CD8-positive, alpha-beta T cell (primary cell): ENCODE measurements at regions of chr2 and their contacts with region 1.

Region 1: DNA sequence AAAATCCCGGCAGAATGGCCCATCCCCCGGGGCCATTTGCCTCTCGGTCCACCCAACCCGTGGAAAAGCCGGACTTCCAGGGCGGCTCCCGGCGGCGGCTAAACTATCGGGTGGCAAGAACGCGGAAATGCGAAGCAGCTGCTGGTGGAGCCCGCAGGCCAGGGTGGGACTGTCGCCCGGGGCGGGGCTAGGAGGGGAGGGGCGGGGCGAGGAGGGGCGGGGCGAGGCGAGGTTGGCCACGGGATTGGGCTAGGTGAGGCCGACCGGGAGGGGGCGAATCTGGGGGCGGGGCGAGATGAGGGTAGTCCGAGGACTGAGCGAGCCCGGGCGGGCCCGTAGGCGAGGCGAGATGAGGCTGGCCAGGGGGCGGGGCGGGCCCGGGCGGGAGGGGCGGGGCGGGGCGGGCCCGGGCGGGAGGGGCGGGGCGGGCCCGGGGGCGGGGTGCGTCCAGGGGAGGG is 315 bp upstream of the SLC66A3 start:
- DNase-seq: peak; percentile 96 to 99 (median 98)
- ATAC-seq: peak; percentile 91
- H3K4me3 ChIP-seq: peak overlapping the region; percentile 55 to 57
- H3K4me3 Mint-ChIP-seq: peak overlapping the region; percentile 80
- H3K27ac ChIP-seq: peak overlapping the region; percentile 68 to 78
- H3K27ac Mint-ChIP-seq: peak overlapping the region; percentile 85
- H3K4me1 ChIP-seq: peaks cover 18% of the 10 kb centered on the region
- H3K4me1 Mint-ChIP-seq: peaks cover 20% of the 10 kb centered on the region
- H3K27me3 ChIP-seq: no peaks in the 10 kb centered on the region
- H3K27me3 Mint-ChIP-seq: no peaks in the 10 kb centered on the region
- CTCF ChIP-seq: no peak

Region 2: DNA sequence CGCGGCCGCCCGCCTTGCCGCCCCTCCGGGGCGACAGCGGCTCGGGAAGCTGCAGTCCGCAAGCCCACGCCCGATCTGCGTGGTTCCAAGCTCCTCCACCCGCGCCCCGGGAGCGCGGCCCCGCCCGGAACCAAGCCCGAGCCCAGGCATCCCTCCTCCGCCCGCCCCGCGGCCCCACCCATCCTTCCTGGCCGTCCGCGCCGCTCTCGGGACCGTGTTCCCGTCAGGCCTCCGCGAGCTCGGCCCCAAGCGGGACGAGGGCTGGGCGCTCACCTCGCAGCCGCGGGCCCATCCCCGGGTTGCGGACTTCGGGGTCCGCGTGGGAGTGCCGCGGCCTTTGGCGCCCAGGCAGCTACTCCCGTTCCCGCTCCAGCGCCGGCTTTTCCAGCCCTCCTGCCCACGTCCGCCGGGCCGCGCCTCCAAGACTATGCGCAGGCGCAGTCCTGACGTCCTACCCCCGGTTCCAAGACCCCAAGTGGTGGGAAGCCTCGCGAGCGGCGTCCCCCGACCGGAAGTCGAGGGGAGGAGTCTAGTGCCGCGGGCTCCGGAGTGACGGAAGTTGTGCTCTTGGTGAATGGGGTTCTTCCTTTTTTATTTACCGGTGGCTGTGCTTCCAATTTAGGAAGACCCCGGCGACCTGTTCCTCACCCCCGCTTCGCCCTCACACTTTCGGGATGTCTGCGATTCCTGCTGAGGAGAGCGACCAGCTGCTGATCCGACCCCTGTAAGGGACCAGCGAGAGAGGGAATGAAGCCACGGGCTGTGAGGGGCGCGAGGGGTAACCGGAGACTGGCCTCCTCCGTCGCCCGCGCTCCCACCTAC is 1731.6 kb before region 1 on chr2 and contains the starts of genes CPSF3 and ITGB1BP1:
- CTCF ChIA-PET with region 1: no interaction called
- POLR2A ChIA-PET with region 1: no interaction called
- intact Hi-C with region 1: loop called in 1 of 2 experiments (anchors 10 kb)
- DNase-seq: peak; percentile 92 to 99 (median 97)
- ATAC-seq: peak; percentile 86
- H3K4me3 ChIP-seq: peak within 1 kb of the TSS; percentile 93 to 98
- H3K4me3 Mint-ChIP-seq: no peak within 1 kb of the TSS
- H3K27ac ChIP-seq: peak within 1 kb of the TSS; percentile 89 to 90
- H3K27ac Mint-ChIP-seq: peak within 1 kb of the TSS; percentile 89
- H3K4me1 ChIP-seq: peaks cover 22% of the 10 kb centered on the region
- H3K4me1 Mint-ChIP-seq: peaks cover 34% of the 10 kb centered on the region
- H3K27me3 ChIP-seq: no peaks in the 10 kb centered on the region
- H3K27me3 Mint-ChIP-seq: no peaks in the 10 kb centered on the region
- CTCF ChIP-seq: no peak
- total RNA-seq, gene CPSF3: 14.1 to 14.7 TPM
- total RNA-seq, gene ITGB1BP1: 37.2 to 38.8 TPM

Region 3: GRCh38 chr2:10302479-10303180 is 852.3 kb before region 1 on chr2 and contains the start of gene HPCAL1:
- CTCF ChIA-PET with region 1: no interaction called
- POLR2A ChIA-PET with region 1: no interaction called
- intact Hi-C with region 1: loop called in 1 of 2 experiments (anchors 10 kb)
- DNase-seq: peak; percentile 54 to 90 (median 80)
- ATAC-seq: peak; percentile 67
- H3K4me3 ChIP-seq: peak within 1 kb of the TSS; percentile 84 to 86
- H3K4me3 Mint-ChIP-seq: peak within 1 kb of the TSS; percentile 98
- H3K27ac ChIP-seq: peak within 1 kb of the TSS; percentile 52 to 73
- H3K27ac Mint-ChIP-seq: peak within 1 kb of the TSS; percentile 92
- H3K4me1 ChIP-seq: peaks cover 60% of the 10 kb centered on the region
- H3K4me1 Mint-ChIP-seq: peaks cover 70% of the 10 kb centered on the region
- H3K27me3 ChIP-seq: no peaks in the 10 kb centered on the region
- H3K27me3 Mint-ChIP-seq: no peaks in the 10 kb centered on the region
- CTCF ChIP-seq: peak; percentile 61
- total RNA-seq, gene HPCAL1: 25.0 to 25.6 TPM

Region 4: DNA sequence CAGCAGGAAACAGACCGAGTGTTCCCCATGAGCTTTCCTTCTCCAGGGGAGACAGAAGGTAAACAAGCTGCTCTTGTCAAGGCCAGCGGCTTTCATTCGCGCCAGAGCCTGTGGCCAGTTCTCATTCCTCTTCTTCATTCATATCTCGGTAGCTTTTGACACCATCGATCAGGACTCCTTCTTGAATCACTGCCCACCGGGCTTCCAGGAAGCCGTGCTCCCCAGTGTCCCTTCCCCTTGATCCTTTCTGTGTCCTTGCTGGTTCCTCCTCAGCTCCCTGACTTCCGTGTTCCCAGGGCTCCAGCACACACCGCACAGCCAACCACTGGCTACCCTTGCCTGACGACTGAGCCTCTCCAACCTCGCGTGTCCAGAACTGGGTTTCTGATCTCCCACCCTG is 14.4 kb after region 1 on chr2:
- CTCF ChIA-PET with region 1: no interaction called
- POLR2A ChIA-PET with region 1: no interaction called
- intact Hi-C with region 1: no loop called
- DNase-seq: no peak
- ATAC-seq: no peak
- H3K4me3 ChIP-seq: no peak overlapping the region
- H3K4me3 Mint-ChIP-seq: no peak overlapping the region
- H3K27ac ChIP-seq: no peak overlapping the region
- H3K27ac Mint-ChIP-seq: no peak overlapping the region
- H3K4me1 ChIP-seq: no peaks in the 10 kb centered on the region
- H3K4me1 Mint-ChIP-seq: no peaks in the 10 kb centered on the region
- H3K27me3 ChIP-seq: no peaks in the 10 kb centered on the region
- H3K27me3 Mint-ChIP-seq: no peaks in the 10 kb centered on the region
- CTCF ChIP-seq: no peak

Region 5: DNA sequence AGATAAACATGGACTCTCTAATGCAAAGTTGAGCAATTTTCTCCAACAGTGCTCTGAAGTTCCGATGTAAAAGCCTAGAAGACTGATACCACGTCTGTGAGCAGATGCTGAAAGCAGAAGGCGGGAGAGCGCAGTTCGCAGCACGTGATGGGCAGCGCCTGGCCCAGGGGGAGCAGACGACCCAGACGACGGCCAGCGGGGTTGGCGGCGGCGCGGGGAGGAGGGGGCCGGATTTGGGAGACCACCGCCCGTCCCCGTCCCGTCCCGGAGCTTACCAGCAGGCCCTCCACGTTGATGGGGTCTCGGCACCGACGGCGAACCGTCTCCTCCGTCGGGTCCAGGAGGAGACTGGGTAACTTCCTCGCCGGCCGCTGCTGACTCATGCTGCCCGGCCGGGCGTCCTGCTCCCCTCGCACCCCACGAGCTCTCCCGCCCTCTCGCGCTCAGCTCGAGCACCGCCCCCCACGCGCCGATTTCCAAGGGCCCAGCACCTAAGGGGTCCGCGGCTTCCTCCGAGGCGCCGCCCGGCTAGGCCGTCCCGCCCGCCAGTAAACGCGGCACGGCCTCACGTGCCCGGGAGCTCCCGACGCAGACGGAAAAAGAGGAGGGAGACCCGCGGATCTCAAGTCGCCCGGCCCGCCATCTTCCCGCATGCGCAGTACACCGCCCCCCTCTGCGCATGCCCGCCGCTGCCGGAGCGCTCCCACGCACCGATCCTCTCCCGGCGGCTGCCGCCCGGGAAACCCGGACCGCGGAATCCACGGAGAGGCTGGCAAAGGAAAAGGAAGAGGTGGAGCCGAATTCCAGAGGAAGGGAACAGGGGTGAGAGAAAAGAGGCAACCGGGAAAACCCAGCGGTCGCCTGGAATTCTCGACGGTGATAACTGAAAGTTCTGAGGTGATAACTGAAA is 310.8 kb after region 1 on chr2 and contains the start of gene E2F6:
- CTCF ChIA-PET with region 1: no interaction called
- POLR2A ChIA-PET with region 1: interaction called, 3 read pairs
- intact Hi-C with region 1: loop called (anchors 1 to 5 kb)
- DNase-seq: peak; percentile 68 to 91 (median 81)
- ATAC-seq: peak; percentile 85
- H3K4me3 ChIP-seq: peak within 1 kb of the TSS; percentile 83 to 87
- H3K4me3 Mint-ChIP-seq: peak within 1 kb of the TSS; percentile 96
- H3K27ac ChIP-seq: peak within 1 kb of the TSS; percentile 51 to 70
- H3K27ac Mint-ChIP-seq: peak within 1 kb of the TSS; percentile 91
- H3K4me1 ChIP-seq: peaks cover 13% of the 10 kb centered on the region
- H3K4me1 Mint-ChIP-seq: peaks cover 37% of the 10 kb centered on the region
- H3K27me3 ChIP-seq: no peaks in the 10 kb centered on the region
- H3K27me3 Mint-ChIP-seq: no peaks in the 10 kb centered on the region
- CTCF ChIP-seq: no peak
- total RNA-seq, gene E2F6: 4.9 to 5.0 TPM

Region 6: GRCh38 chr2:12728221-12728777 is 1573.3 kb after region 1 on chr2:
- CTCF ChIA-PET with region 1: no interaction called
- POLR2A ChIA-PET with region 1: no interaction called
- intact Hi-C with region 1: loop called in 1 of 2 experiments (anchors 10 kb)
- DNase-seq: peak; percentile 15 to 84 (median 64)
- ATAC-seq: peak; percentile 83
- H3K4me3 ChIP-seq: peak overlapping the region; percentile 6 to 28
- H3K4me3 Mint-ChIP-seq: peak overlapping the region; percentile 59
- H3K27ac ChIP-seq: peak overlapping the region; percentile 18 to 65
- H3K27ac Mint-ChIP-seq: peak overlapping the region; percentile 77
- H3K4me1 ChIP-seq: peaks cover 46% of the 10 kb centered on the region
- H3K4me1 Mint-ChIP-seq: peaks cover 87% of the 10 kb centered on the region
- H3K27me3 ChIP-seq: no peaks in the 10 kb centered on the region
- H3K27me3 Mint-ChIP-seq: no peaks in the 10 kb centered on the region
- CTCF ChIP-seq: no peak